ENCODE measurements at regions of chr19 and their contacts with region 1.

Region 1: GRCh38 chr19:58097781-58098681 is at the start of gene ZSCAN18:
- DNase-seq: peak; percentile 99
- ATAC-seq: peak; percentile 100
- total RNA-seq, gene ZSCAN18: 54.0 to 60.9 TPM

Region 2: GRCh38 chr19:58033741-58034471 is 64.1 kb before region 1 on chr19 and contains the start of gene ZSCAN1:
- intact Hi-C with region 1: loop called in 1 of 2 experiments (anchors 10 kb)
- DNase-seq: peak; percentile 96
- ATAC-seq: peak; percentile 99
- total RNA-seq, gene ZSCAN1: 0.42 TPM in 1 of 2 donors, not detected in the other

Region 3: GRCh38 chr19:58059003-58059670 is 38.9 kb before region 1 on chr19 and contains the start of gene ZNF135:
- intact Hi-C with region 1: loop called in 1 of 2 experiments (anchors 5 kb)
- DNase-seq: peak; percentile 93
- ATAC-seq: peak; percentile 97 to 98
- total RNA-seq, gene ZNF135: 2.5 to 3.4 TPM